Psoas muscle (tissue), 8 donors: ENCODE measurements at regions of chr16 and their contacts with region 1.

Region 1: GRCh38 chr16:31142109-31143010 is 6.8 kb upstream of the PRSS8 start:
- DNase-seq: peak; percentile 99
- ATAC-seq: peak; percentile 91 to 95 (median 93)
- H3K4me3 ChIP-seq: peak overlapping the region; percentile 70
- H3K27ac ChIP-seq: peak overlapping the region; percentile 82
- H3K4me1 ChIP-seq: peaks cover 23% of the 10 kb centered on the region
- H3K27me3 ChIP-seq: no peaks in the 10 kb centered on the region
- CTCF ChIP-seq: peak; percentile 93

Region 2: DNA sequence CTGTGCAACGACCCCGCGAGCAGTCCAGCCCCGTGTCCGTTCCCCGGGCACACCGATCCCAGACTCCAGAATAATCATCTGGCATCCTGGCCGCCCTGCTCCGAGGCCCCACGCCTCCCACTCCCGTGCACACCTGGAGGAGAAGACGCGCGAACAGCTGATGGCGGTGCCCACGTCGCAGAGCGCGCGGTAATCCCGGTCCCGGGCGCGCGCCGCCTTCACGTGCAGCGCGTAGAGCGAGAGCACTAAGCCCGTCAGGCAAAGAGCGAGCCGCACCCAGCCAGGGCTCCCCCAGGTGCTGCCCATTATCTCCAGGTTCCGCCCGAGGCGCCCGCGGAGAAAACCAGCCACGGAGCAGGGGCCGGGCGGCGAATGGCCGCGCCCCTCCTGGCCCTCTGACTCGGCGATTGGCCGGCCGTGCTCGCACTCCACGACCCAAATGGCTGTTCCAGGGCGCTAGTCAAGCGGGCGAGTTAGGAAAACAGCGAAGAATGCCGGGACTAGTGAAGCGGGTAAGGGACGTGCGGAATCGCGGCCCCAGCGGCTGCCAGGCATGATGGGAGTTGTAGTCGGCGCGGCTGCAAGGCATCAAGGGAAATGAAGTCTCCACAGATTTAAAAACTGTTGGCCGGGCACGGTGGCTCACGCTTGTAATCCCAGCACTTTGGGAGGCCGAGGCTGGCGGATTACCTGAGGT is 47.8 kb before region 1 on chr16 and contains the start of gene VKORC1:
- intact Hi-C with region 1: loop called in 1 of 2 experiments (anchors 1 kb)
- DNase-seq: peak; percentile 94 to 97
- ATAC-seq: peak; percentile 93 to 96 (median 94)
- H3K4me3 ChIP-seq: peak within 1 kb of the TSS; percentile 98
- H3K27ac ChIP-seq: peak within 1 kb of the TSS; percentile 94
- H3K4me1 ChIP-seq: peaks cover 4% of the 10 kb centered on the region
- H3K27me3 ChIP-seq: no peaks in the 10 kb centered on the region
- CTCF ChIP-seq: no peak
- total RNA-seq, gene VKORC1: 13.3 to 17.8 (median 16.5) TPM

Region 3: GRCh38 chr16:31108035-31108793 is 34.1 kb before region 1 on chr16 and contains the start of gene BCKDK:
- intact Hi-C with region 1: loop called in 1 of 2 experiments (anchors 5 kb)
- DNase-seq: peak; percentile 85 to 86
- ATAC-seq: peak; percentile 62 to 74 (median 69)
- H3K4me3 ChIP-seq: peak within 1 kb of the TSS; percentile 86
- H3K27ac ChIP-seq: peak within 1 kb of the TSS; percentile 90
- H3K4me1 ChIP-seq: peaks cover 32% of the 10 kb centered on the region
- H3K27me3 ChIP-seq: no peaks in the 10 kb centered on the region
- CTCF ChIP-seq: no peak
- total RNA-seq, gene BCKDK: 36.7 to 72.8 (median 55.4) TPM

Region 4: GRCh38 chr16:31179747-31180459 is 37.5 kb after region 1 on chr16 and contains the start of gene FUS:
- intact Hi-C with region 1: no loop called
- DNase-seq: peak; percentile 88 to 96
- ATAC-seq: peak; percentile 81 to 88 (median 85)
- H3K4me3 ChIP-seq: peak within 1 kb of the TSS; percentile 95
- H3K27ac ChIP-seq: peak within 1 kb of the TSS; percentile 99
- H3K4me1 ChIP-seq: peaks cover 34% of the 10 kb centered on the region
- H3K27me3 ChIP-seq: no peaks in the 10 kb centered on the region
- CTCF ChIP-seq: no peak
- total RNA-seq, gene FUS: 133 to 246 (median 160) TPM